CD4-positive, alpha-beta memory T cell (primary cell): ENCODE measurements at regions of chr1 and their contacts with region 1.

Region 1: GRCh38 chr1:24586970-24587820 is 31.3 kb downstream of the NCMAP start:
- DNase-seq: peak; percentile 69 to 78 (median 74)
- H3K4me3 ChIP-seq: no peak overlapping the region
- H3K4me3 Mint-ChIP-seq: peak overlapping the region in 1 of 8 donors; percentile 46
- H3K27ac ChIP-seq: no peak overlapping the region
- H3K27ac Mint-ChIP-seq: peak overlapping the region in 6 of 7 donors; percentile 53 to 89 (median 80)
- H3K4me1 ChIP-seq: peaks cover 5% of the 10 kb centered on the region
- H3K4me1 Mint-ChIP-seq: peaks cover 0 to 9% (median 6%) of the 10 kb centered on the region in 4 donors
- H3K27me3 ChIP-seq: no peaks in the 10 kb centered on the region
- H3K27me3 Mint-ChIP-seq: peaks cover 0 to 1% of the 10 kb centered on the region in 2 donors

Region 2: GRCh38 chr1:23417570-23417969 is 1169.6 kb before region 1 on chr1:
- CTCF ChIA-PET with region 1: no interaction called
- POLR2A ChIA-PET with region 1: no interaction called
- intact Hi-C with region 1: no loop called
- DNase-seq: no peak
- H3K4me3 ChIP-seq: no peak overlapping the region
- H3K4me3 Mint-ChIP-seq: no peak overlapping the region
- H3K27ac ChIP-seq: no peak overlapping the region
- H3K27ac Mint-ChIP-seq: peak overlapping the region in 1 of 7 donors; percentile 15
- H3K4me1 ChIP-seq: peaks cover 14% of the 10 kb centered on the region
- H3K4me1 Mint-ChIP-seq: peaks cover 9 to 16% (median 14%) of the 10 kb centered on the region in 4 donors
- H3K27me3 ChIP-seq: no peaks in the 10 kb centered on the region
- H3K27me3 Mint-ChIP-seq: no peaks in the 10 kb centered on the region

Region 3: GRCh38 chr1:24391882-24392603 is 195.2 kb before region 1 on chr1:
- CTCF ChIA-PET with region 1: interaction called, 91 read pairs
- POLR2A ChIA-PET with region 1: interaction called, 7 read pairs
- intact Hi-C with region 1: loop called (anchors 1 kb)
- DNase-seq: peak; percentile 62 to 75 (median 69)
- H3K4me3 ChIP-seq: peak overlapping the region in 1 of 2 donors; percentile 17
- H3K4me3 Mint-ChIP-seq: peak overlapping the region; percentile 81 to 92 (median 86)
- H3K27ac ChIP-seq: peak overlapping the region; percentile 72
- H3K27ac Mint-ChIP-seq: peak overlapping the region; percentile 94 to 99 (median 98)
- H3K4me1 ChIP-seq: peaks cover 33% of the 10 kb centered on the region
- H3K4me1 Mint-ChIP-seq: peaks cover 23 to 29% (median 26%) of the 10 kb centered on the region in 4 donors
- H3K27me3 ChIP-seq: no peaks in the 10 kb centered on the region
- H3K27me3 Mint-ChIP-seq: no peaks in the 10 kb centered on the region

Region 4: DNA sequence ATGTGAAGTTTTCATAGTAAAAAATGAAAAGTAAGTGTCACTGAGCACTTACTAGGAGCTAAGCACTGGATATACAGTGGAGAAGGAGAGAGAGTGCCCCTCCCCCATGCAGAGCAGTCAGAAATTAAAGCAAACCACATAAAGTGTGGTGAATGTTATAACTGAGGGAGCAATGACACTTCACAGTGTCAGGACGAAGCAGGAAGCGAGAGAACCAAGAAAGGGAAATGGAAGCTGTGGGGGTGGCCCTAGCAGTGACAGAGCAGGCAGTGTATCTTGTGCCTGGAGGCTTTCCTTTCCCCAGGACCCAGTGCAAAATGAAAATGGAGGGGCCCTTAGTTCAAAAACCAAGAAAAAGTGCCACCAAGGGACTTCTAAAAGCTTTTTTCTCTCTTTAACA is 106.1 kb before region 1 on chr1:
- CTCF ChIA-PET with region 1: interaction called, 19 read pairs
- POLR2A ChIA-PET with region 1: interaction called, 7 read pairs
- intact Hi-C with region 1: loop called (anchors 5 kb)
- DNase-seq: peak; percentile 59 to 77 (median 67)
- H3K4me3 ChIP-seq: peak overlapping the region in 1 of 2 donors; percentile 50
- H3K4me3 Mint-ChIP-seq: peak overlapping the region; percentile 66 to 96 (median 86)
- H3K27ac ChIP-seq: peak overlapping the region; percentile 61
- H3K27ac Mint-ChIP-seq: peak overlapping the region; percentile 96 to 99 (median 99)
- H3K4me1 ChIP-seq: peaks cover 62% of the 10 kb centered on the region
- H3K4me1 Mint-ChIP-seq: peaks cover 42 to 72% (median 57%) of the 10 kb centered on the region in 4 donors
- H3K27me3 ChIP-seq: no peaks in the 10 kb centered on the region
- H3K27me3 Mint-ChIP-seq: no peaks in the 10 kb centered on the region

Region 5: DNA sequence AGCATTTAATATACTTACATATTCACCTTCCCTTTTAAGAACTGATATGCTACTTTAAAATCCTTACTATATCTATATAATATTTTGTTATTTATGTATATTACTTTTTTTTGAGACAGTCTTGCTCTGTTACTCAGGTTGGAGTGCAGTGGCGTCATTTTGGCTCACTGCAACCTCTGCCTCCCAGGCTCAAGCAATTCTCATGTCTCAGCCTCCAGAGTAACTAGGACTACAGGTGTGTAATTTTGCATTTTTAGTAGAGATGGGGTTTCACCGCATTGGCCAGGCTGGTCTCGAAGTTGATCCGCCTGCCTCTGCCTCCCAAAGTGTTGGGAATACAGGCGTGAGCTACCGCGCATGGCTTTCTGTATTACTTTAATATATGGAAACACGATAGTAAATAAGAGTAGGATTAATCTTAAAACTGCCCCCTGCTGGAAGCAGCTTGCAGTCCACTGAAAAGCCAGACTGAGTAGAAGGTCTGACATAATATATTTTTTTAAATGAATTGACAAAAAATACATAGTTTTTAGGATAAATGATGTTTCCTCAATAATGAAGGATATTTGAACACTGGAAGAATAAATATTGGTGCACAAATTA is 60.2 kb before region 1 on chr1:
- CTCF ChIA-PET with region 1: interaction called, 28 read pairs
- POLR2A ChIA-PET with region 1: no interaction called
- intact Hi-C with region 1: no loop called
- DNase-seq: peak; percentile 47 to 59 (median 53)
- H3K4me3 ChIP-seq: no peak overlapping the region
- H3K4me3 Mint-ChIP-seq: peak overlapping the region in 3 of 8 donors; percentile 36 to 58 (median 52)
- H3K27ac ChIP-seq: peak overlapping the region; percentile 31
- H3K27ac Mint-ChIP-seq: peak overlapping the region; percentile 65 to 94 (median 87)
- H3K4me1 ChIP-seq: peaks cover 71% of the 10 kb centered on the region
- H3K4me1 Mint-ChIP-seq: peaks cover 46 to 82% (median 63%) of the 10 kb centered on the region in 4 donors
- H3K27me3 ChIP-seq: no peaks in the 10 kb centered on the region
- H3K27me3 Mint-ChIP-seq: no peaks in the 10 kb centered on the region

Region 6: GRCh38 chr1:24547195-24547594 is 40.0 kb before region 1 on chr1:
- CTCF ChIA-PET with region 1: interaction called, 23 read pairs
- POLR2A ChIA-PET with region 1: no interaction called
- intact Hi-C with region 1: loop called (anchors 1 kb)
- DNase-seq: no peak
- H3K4me3 ChIP-seq: no peak overlapping the region
- H3K4me3 Mint-ChIP-seq: no peak overlapping the region
- H3K27ac ChIP-seq: no peak overlapping the region
- H3K27ac Mint-ChIP-seq: no peak overlapping the region
- H3K4me1 ChIP-seq: peaks cover 17% of the 10 kb centered on the region
- H3K4me1 Mint-ChIP-seq: peaks cover 19 to 22% (median 21%) of the 10 kb centered on the region in 4 donors
- H3K27me3 ChIP-seq: no peaks in the 10 kb centered on the region
- H3K27me3 Mint-ChIP-seq: no peaks in the 10 kb centered on the region

Region 7: DNA sequence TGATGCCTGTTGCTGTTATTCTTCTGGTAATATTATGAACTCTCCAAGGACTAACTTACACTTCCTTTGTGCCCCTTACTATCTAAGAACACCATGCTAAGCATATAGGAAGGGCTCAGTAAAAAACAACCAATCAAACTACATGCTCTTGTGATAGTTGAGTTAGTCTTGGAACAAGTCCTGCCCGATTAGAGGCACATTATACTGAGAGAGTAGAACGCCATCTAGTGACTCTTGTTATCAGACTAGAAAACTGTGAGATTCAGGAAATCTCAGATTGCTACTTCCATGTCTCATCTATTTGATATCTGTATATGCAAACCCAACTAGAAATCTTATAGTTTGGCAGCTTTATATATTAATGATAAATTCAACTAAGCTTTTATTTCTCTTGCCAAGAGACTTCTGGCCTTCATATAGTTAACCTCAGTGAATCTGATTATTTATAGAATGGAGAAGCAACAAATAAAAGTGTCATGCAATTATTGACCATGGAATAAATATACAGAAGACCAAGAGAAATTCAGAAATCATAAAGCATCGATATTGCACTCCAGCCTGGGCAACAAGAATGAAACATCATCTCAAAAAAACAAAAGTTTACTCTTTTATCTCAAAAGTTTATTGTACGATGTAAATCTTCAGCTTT is 48.1 kb after region 1 on chr1:
- CTCF ChIA-PET with region 1: interaction called, 17 read pairs
- POLR2A ChIA-PET with region 1: interaction called, 3 read pairs
- intact Hi-C with region 1: loop called (anchors 1 kb)
- DNase-seq: peak in 4 of 5 donors; percentile 55 to 63 (median 57)
- H3K4me3 ChIP-seq: no peak overlapping the region
- H3K4me3 Mint-ChIP-seq: no peak overlapping the region
- H3K27ac ChIP-seq: no peak overlapping the region
- H3K27ac Mint-ChIP-seq: no peak overlapping the region
- H3K4me1 ChIP-seq: no peaks in the 10 kb centered on the region
- H3K4me1 Mint-ChIP-seq: peaks cover 2 to 11% (median 3%) of the 10 kb centered on the region in 4 donors
- H3K27me3 ChIP-seq: no peaks in the 10 kb centered on the region
- H3K27me3 Mint-ChIP-seq: peaks cover 2 to 5% of the 10 kb centered on the region in 2 donors

Region 8: GRCh38 chr1:24805534-24806301 is 218.5 kb after region 1 on chr1:
- CTCF ChIA-PET with region 1: no interaction called
- POLR2A ChIA-PET with region 1: no interaction called
- intact Hi-C with region 1: no loop called
- DNase-seq: no peak
- H3K4me3 ChIP-seq: no peak overlapping the region
- H3K4me3 Mint-ChIP-seq: no peak overlapping the region
- H3K27ac ChIP-seq: no peak overlapping the region
- H3K27ac Mint-ChIP-seq: no peak overlapping the region
- H3K4me1 ChIP-seq: no peaks in the 10 kb centered on the region
- H3K4me1 Mint-ChIP-seq: peaks cover 0 to 2% (median 0%) of the 10 kb centered on the region in 4 donors
- H3K27me3 ChIP-seq: no peaks in the 10 kb centered on the region
- H3K27me3 Mint-ChIP-seq: peaks cover 0 to 2% of the 10 kb centered on the region in 2 donors